Breast epithelium (tissue), 4 donors: ENCODE measurements at regions of chr14 and their contacts with region 1.

Region 1: DNA sequence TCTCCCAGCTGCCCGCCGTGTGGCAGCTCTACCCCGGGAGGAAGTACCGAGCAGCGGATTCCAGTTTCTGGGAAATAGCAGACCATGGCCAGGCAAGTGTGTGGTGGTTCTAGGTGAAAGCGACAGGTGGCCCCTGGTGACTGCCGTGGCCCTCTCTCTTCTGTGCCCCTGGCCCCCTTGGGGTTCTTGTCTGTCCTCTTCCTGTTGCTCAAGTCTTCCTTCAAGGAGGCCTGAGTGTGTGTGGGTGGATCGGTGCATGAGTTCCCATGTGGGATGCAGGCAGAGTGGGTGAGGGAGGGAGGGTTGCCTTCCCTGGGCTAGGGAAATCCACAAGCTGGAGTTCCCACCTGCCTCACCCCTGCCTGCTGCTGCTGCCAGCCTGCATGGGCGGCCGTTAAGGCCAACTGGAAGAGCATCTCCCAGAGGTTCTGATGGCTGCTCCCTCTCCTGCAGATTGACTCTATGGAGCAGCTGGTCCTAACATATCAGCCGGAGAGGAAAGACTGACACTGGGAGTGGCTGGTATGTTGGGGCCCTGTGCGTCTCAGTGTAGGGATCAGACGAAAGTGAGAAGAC is 4.7 kb downstream of the TCL1B start:
- DNase-seq: no peak
- H3K4me3 ChIP-seq: no peak overlapping the region
- H3K27ac ChIP-seq: no peak overlapping the region
- H3K4me1 ChIP-seq: no peaks in the 10 kb centered on the region
- H3K27me3 ChIP-seq: peaks cover 0 to 24% of the 10 kb centered on the region in 2 donors
- CTCF ChIP-seq: no peak
- POLR2A ChIP-seq: no peak

Region 2: GRCh38 chr14:93759719-93760307 is 1931.1 kb before region 1 on chr14:
- intact Hi-C with region 1: loop called (anchors 5 kb)
- DNase-seq: peak in 1 of 2 donors; percentile 54
- H3K4me3 ChIP-seq: no peak overlapping the region
- H3K27ac ChIP-seq: peak overlapping the region; percentile 33 to 45
- H3K4me1 ChIP-seq: no peaks in the 10 kb centered on the region
- H3K27me3 ChIP-seq: no peaks in the 10 kb centered on the region
- CTCF ChIP-seq: no peak
- POLR2A ChIP-seq: no peak

Region 3: GRCh38 chr14:96104469-96105057 is 413.7 kb after region 1 on chr14:
- intact Hi-C with region 1: no loop called
- DNase-seq: peak; percentile 67 to 87
- H3K4me3 ChIP-seq: peak overlapping the region in 1 of 3 donors; percentile 3
- H3K27ac ChIP-seq: peak overlapping the region; percentile 77 to 83
- H3K4me1 ChIP-seq: peaks cover 0 to 2% of the 10 kb centered on the region in 2 donors
- H3K27me3 ChIP-seq: peaks cover 0 to 4% of the 10 kb centered on the region in 2 donors
- CTCF ChIP-seq: peak in 2 of 3 donors; percentile 20 to 21
- POLR2A ChIP-seq: no peak